ENCODE measurements at regions of chr12 and their contacts with region 1.

Region 1: GRCh38 chr12:31868965-31869364 is 90.2 kb upstream of the RESF1 start:
- DNase-seq: no peak
- H3K4me3 Mint-ChIP-seq: no peak overlapping the region
- H3K27ac Mint-ChIP-seq: no peak overlapping the region
- H3K4me1 Mint-ChIP-seq: peaks cover 4% of the 10 kb centered on the region
- H3K27me3 Mint-ChIP-seq: no peaks in the 10 kb centered on the region

Region 2: DNA sequence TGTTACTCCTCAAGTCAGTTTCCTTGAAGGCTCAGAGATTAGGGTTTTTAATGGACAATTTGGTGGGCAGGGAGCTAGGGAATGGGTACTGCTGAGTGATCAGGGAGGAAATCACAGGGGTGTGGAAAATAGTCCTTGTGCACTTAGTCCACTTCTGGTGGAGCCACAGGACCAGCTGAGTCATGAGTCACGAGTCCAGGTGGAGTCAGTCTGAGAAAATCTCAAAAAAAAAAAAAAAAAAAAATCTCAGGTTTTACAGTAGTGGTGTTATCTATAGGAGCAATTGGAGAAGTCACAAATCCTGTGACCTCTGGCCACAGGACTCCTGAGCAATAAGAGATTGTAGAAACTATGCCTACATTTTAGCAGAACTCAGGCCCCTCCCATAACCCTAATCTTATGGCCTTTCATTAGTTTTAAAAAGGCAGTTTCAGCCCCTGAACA is 112.0 kb before region 1 on chr12:
- CTCF ChIA-PET with region 1: no interaction called
- POLR2A ChIA-PET with region 1: no interaction called
- DNase-seq: no peak
- H3K4me3 Mint-ChIP-seq: no peak overlapping the region
- H3K27ac Mint-ChIP-seq: no peak overlapping the region
- H3K4me1 Mint-ChIP-seq: peaks cover 15% of the 10 kb centered on the region
- H3K27me3 Mint-ChIP-seq: no peaks in the 10 kb centered on the region

Region 3: DNA sequence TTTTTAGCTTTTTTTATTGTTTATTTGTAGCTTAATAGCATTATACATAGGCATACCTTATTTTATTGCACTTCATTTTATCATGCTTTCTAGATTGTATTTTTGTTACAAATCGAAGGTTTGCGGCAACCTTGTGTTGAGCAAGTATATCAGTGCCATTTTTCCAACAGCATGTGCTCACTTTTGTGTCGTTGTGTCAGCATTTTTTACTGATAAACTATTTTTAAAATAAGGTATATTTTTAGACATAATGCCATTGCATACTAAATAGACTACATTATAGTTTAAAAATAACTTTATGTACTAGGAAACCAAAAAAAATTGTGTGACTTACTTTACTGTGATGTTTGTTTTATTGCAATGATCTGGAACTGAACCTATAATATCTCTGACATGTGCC is 34.1 kb after region 1 on chr12:
- CTCF ChIA-PET with region 1: no interaction called
- POLR2A ChIA-PET with region 1: no interaction called
- DNase-seq: no peak
- H3K4me3 Mint-ChIP-seq: no peak overlapping the region
- H3K27ac Mint-ChIP-seq: no peak overlapping the region
- H3K4me1 Mint-ChIP-seq: peaks cover 21% of the 10 kb centered on the region
- H3K27me3 Mint-ChIP-seq: no peaks in the 10 kb centered on the region

Region 4: GRCh38 chr12:31914927-31915326 is 46.0 kb after region 1 on chr12:
- CTCF ChIA-PET with region 1: interaction called, 7 read pairs
- POLR2A ChIA-PET with region 1: interaction called, 15 read pairs
- DNase-seq: no peak
- H3K4me3 Mint-ChIP-seq: no peak overlapping the region
- H3K27ac Mint-ChIP-seq: no peak overlapping the region
- H3K4me1 Mint-ChIP-seq: no peaks in the 10 kb centered on the region
- H3K27me3 Mint-ChIP-seq: no peaks in the 10 kb centered on the region

Measured in activated CD4-positive, alpha-beta T cell treated with anti-CD3 and anti-CD28 coated beads, Interleukin-2, amount 10 ng/mL, durations not matched to agents 7 days and 5 days (primary cell).